ENCODE measurements at regions of chr3 and their contacts with region 1.

Region 1: GRCh38 chr3:111311709-111312235 is 230.2 kb upstream of the CD96 start:
- DNase-seq: peak in 1 of 9 experiments; percentile 42
- ATAC-seq: peak; percentile 53
- H3K4me3 ChIP-seq: no peak overlapping the region
- H3K4me3 Mint-ChIP-seq: peak overlapping the region; percentile 0
- H3K27ac ChIP-seq: peak overlapping the region; percentile 3 to 78
- H3K27ac Mint-ChIP-seq: peak overlapping the region; percentile 87
- H3K4me1 ChIP-seq: peaks cover 50% of the 10 kb centered on the region
- H3K4me1 Mint-ChIP-seq: peaks cover 27% of the 10 kb centered on the region
- H3K27me3 ChIP-seq: no peaks in the 10 kb centered on the region
- H3K27me3 Mint-ChIP-seq: no peaks in the 10 kb centered on the region
- CTCF ChIP-seq: no peak

Region 2: GRCh38 chr3:111238885-111239284 is 72.9 kb before region 1 on chr3:
- CTCF ChIA-PET with region 1: no interaction called
- POLR2A ChIA-PET with region 1: no interaction called
- intact Hi-C with region 1: loop called in 1 of 2 experiments (anchors 5 kb)
- DNase-seq: peak in 2 of 9 experiments; percentile 43 to 69
- ATAC-seq: peak; percentile 75
- H3K4me3 ChIP-seq: no peak overlapping the region
- H3K4me3 Mint-ChIP-seq: peak overlapping the region; percentile 19
- H3K27ac ChIP-seq: peak overlapping the region in 1 of 2 experiments; percentile 28
- H3K27ac Mint-ChIP-seq: peak overlapping the region; percentile 35
- H3K4me1 ChIP-seq: peaks cover 23% of the 10 kb centered on the region
- H3K4me1 Mint-ChIP-seq: peaks cover 44% of the 10 kb centered on the region
- H3K27me3 ChIP-seq: no peaks in the 10 kb centered on the region
- H3K27me3 Mint-ChIP-seq: no peaks in the 10 kb centered on the region
- CTCF ChIP-seq: no peak

Region 3: GRCh38 chr3:111285694-111286093 is 26.1 kb before region 1 on chr3:
- CTCF ChIA-PET with region 1: interaction called, 3 read pairs
- POLR2A ChIA-PET with region 1: no interaction called
- intact Hi-C with region 1: loop called in 1 of 2 experiments (anchors 5 kb)
- DNase-seq: no peak
- ATAC-seq: no peak
- H3K4me3 ChIP-seq: no peak overlapping the region
- H3K4me3 Mint-ChIP-seq: no peak overlapping the region
- H3K27ac ChIP-seq: no peak overlapping the region
- H3K27ac Mint-ChIP-seq: no peak overlapping the region
- H3K4me1 ChIP-seq: peaks cover 5% of the 10 kb centered on the region
- H3K4me1 Mint-ChIP-seq: peaks cover 19% of the 10 kb centered on the region
- H3K27me3 ChIP-seq: no peaks in the 10 kb centered on the region
- H3K27me3 Mint-ChIP-seq: no peaks in the 10 kb centered on the region
- CTCF ChIP-seq: no peak

Region 4: GRCh38 chr3:111324645-111325044 is 12.9 kb after region 1 on chr3:
- CTCF ChIA-PET with region 1: interaction called, 3 read pairs
- POLR2A ChIA-PET with region 1: interaction called, 5 read pairs
- intact Hi-C with region 1: loop called in 1 of 2 experiments (anchors 1 kb)
- DNase-seq: peak in 2 of 9 experiments; percentile 7 to 35
- ATAC-seq: peak; percentile 57
- H3K4me3 ChIP-seq: peak overlapping the region; percentile 4 to 7
- H3K4me3 Mint-ChIP-seq: peak overlapping the region; percentile 72
- H3K27ac ChIP-seq: peak overlapping the region in 1 of 2 experiments; percentile 62
- H3K27ac Mint-ChIP-seq: peak overlapping the region; percentile 75
- H3K4me1 ChIP-seq: peaks cover 13% of the 10 kb centered on the region
- H3K4me1 Mint-ChIP-seq: peaks cover 30% of the 10 kb centered on the region
- H3K27me3 ChIP-seq: no peaks in the 10 kb centered on the region
- H3K27me3 Mint-ChIP-seq: no peaks in the 10 kb centered on the region
- CTCF ChIP-seq: no peak

Region 5: GRCh38 chr3:111547631-111548030 is 235.9 kb after region 1 on chr3:
- CTCF ChIA-PET with region 1: no interaction called
- POLR2A ChIA-PET with region 1: interaction called, 3 read pairs
- intact Hi-C with region 1: loop called in 1 of 2 experiments (anchors 5 kb)
- DNase-seq: peak in 7 of 9 experiments; percentile 26 to 86 (median 66)
- ATAC-seq: peak; percentile 76
- H3K4me3 ChIP-seq: peak overlapping the region; percentile 33 to 67
- H3K4me3 Mint-ChIP-seq: no peak overlapping the region
- H3K27ac ChIP-seq: peak overlapping the region; percentile 57 to 89
- H3K27ac Mint-ChIP-seq: no peak overlapping the region
- H3K4me1 ChIP-seq: peaks cover 82% of the 10 kb centered on the region
- H3K4me1 Mint-ChIP-seq: peaks cover 36% of the 10 kb centered on the region
- H3K27me3 ChIP-seq: no peaks in the 10 kb centered on the region
- H3K27me3 Mint-ChIP-seq: no peaks in the 10 kb centered on the region
- CTCF ChIP-seq: no peak

Measured in CD8-positive, alpha-beta T cell (primary cell).